ENCODE measurements at regions of chr20 and their contacts with region 1.

Region 1: DNA sequence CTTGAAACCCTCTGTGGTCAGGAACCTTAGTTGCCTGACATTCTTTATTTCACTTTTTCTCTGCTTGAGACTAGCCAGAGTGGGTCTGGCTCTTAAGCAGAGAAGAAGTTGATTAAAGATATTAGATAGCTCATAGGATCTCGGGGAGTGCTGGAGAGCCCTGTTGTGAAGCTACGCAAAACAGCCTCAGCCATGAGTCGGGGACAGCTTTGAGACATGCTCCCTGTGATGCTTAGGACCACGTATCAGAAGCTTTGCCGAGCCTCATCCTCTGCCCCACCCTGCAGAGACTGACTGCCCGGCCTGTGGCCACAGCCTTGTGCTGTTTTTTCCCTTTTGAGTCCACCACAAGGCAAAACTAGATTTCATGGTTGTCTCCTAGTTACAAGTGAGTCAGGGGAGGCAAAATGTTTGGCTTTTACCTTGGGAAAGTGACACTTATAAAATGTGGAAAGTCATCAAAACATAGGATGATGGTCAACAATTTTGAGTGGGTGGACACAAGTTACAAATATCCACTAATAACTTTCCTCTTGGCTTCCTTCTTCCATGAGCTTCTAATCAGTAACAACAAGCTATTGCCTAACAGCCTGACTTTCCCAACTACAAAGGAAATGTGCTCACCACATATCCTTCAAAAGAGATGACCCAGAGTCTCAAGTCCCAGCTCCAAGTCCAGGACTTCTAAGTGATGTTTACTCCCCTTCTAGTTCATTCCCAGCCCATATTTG is 108.4 kb downstream of the JAG1 start:
- DNase-seq: peak; percentile 99
- ATAC-seq: peak; percentile 82
- H3K4me3 ChIP-seq: peak overlapping the region in 1 of 3 experiments; percentile 16; a peak in 1 of 6 replicates
- H3K27ac ChIP-seq: peak overlapping the region; percentile 97
- H3K4me1 ChIP-seq: peaks cover 62% of the 10 kb centered on the region
- H3K27me3 ChIP-seq: no peaks in the 10 kb centered on the region
- CTCF ChIP-seq: no peak
- EP300 ChIP-seq: peak; percentile 91 to 100
- POLR2A ChIP-seq: peak; percentile 24 to 49; a peak in 2 of 4 replicates
- RAD21 ChIP-seq: 0 out of 2 replicates have a peak, but pooled peaks have one; percentile 12

Region 2: DNA sequence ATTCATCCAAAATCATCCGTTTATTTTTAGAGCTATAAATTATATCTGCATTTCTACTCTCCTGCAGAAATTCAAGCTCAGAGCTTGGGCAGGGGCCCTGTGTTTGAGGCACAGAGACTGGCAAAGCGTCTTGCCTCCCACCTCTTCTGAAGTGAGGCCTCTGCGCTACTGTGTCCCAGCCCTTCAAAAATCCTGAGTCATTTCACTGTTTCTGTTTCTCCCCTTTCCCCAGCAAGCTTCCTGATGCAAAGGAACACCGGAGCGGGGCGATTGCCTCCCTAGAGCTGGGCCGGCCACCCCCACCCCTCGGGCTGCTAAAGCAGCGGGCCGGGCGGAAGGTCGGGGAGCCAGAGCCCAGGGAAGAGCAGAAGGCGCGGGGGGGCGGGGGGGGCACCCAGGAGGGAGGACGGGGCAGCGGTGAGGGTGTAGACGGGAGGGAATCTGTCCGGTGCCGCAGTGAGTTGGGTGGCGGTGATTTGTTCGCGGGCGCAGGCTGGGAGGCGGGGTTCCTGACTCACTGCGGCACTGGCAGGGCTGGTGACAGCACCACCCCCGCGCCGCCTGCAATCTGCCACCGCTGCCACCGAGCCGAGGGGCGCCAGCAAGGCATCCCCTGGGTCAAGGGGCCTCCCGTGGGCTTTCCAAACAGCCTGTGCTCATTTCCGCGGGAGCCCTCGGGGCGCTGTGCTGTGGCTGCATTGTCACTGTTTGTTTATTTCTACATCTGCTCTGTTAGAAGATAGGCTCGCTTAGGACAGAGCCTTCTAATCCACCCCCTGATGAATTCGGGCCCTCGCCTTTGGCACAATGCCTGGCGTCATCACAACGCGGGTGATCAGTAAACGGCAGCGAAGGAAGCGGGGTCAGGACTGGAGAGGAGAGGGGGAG is 393.2 kb before region 1 on chr20:
- CTCF ChIA-PET with region 1: no interaction called
- POLR2A ChIA-PET with region 1: no interaction called
- in situ Hi-C with region 1: no loop called
- intact Hi-C with region 1: no loop called
- DNase-seq: no peak
- ATAC-seq: peak; percentile 65
- H3K4me3 ChIP-seq: no peak overlapping the region
- H3K27ac ChIP-seq: no peak overlapping the region
- H3K4me1 ChIP-seq: no peaks in the 10 kb centered on the region
- H3K27me3 ChIP-seq: no peaks in the 10 kb centered on the region; a peak in 1 of 5 replicates
- CTCF ChIP-seq: no peak
- EP300 ChIP-seq: no peak
- POLR2A ChIP-seq: no peak
- RAD21 ChIP-seq: no peak

Region 3: GRCh38 chr20:10469599-10469998 is 95.8 kb before region 1 on chr20:
- CTCF ChIA-PET with region 1: no interaction called
- POLR2A ChIA-PET with region 1: no interaction called
- in situ Hi-C with region 1: no loop called
- intact Hi-C with region 1: no loop called
- DNase-seq: peak; percentile 77
- ATAC-seq: peak; percentile 80
- H3K4me3 ChIP-seq: no peak overlapping the region
- H3K27ac ChIP-seq: no peak overlapping the region
- H3K4me1 ChIP-seq: peaks cover 27% of the 10 kb centered on the region
- H3K27me3 ChIP-seq: no peaks in the 10 kb centered on the region
- CTCF ChIP-seq: peak; percentile 74
- EP300 ChIP-seq: no peak
- POLR2A ChIP-seq: no peak
- RAD21 ChIP-seq: peak; percentile 65

Region 4: GRCh38 chr20:10596726-10597125 is 31.4 kb after region 1 on chr20:
- CTCF ChIA-PET with region 1: no interaction called
- POLR2A ChIA-PET with region 1: interaction called, 15 read pairs
- in situ Hi-C with region 1: no loop called
- intact Hi-C with region 1: no loop called
- DNase-seq: peak; percentile 91
- ATAC-seq: peak; percentile 65
- H3K4me3 ChIP-seq: no peak overlapping the region
- H3K27ac ChIP-seq: peak overlapping the region; percentile 30
- H3K4me1 ChIP-seq: peaks cover 53% of the 10 kb centered on the region
- H3K27me3 ChIP-seq: no peaks in the 10 kb centered on the region
- CTCF ChIP-seq: no peak
- EP300 ChIP-seq: peak; percentile 51 to 52; a peak in 1 of 4 replicates
- POLR2A ChIP-seq: no peak
- RAD21 ChIP-seq: no peak

Region 5: DNA sequence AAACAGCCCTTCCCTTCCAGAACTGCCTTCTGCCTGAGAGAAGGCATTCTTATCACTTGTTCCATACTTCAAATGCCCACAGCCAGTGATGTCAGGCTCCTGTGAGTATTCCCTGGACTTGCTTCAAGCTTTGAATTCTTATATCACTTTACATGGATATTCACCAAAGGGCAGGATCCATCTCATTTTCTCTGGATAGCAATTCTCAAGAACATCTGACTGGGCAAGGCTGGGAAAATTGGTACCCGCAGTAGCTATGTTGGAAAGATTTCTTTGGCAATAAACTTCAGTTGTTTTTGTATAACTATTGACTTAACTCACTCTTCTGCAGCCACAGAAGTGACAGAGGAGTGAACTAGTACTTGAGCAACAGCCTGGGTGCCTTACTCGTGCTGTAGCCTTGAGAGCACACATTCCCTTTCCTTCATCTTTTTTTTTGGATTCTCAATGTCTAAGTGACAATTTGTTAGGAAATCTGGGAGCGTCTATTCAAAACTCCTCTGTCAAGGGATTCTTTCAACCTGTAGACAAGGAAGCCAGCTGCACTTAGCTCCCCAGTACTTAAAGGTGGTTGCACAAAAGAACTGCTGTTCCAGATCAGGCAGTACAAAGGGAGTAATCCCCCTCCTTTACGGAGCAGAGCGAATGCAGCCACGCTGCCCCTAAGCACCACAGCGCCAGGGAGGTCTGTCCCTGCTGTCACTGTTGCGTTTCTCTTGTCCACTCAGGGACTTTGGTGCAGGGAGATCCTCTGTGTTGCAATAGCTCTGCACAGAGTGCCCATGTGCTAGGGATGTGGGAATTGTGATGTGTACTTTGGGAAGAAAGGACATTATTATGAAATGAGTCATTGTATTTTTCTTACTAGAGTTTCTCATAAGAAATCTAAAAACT is 38.9 kb after region 1 on chr20:
- CTCF ChIA-PET with region 1: no interaction called
- POLR2A ChIA-PET with region 1: interaction called, 29 read pairs
- in situ Hi-C with region 1: no loop called
- intact Hi-C with region 1: loop called (anchors 1 kb)
- DNase-seq: peak; percentile 99
- ATAC-seq: peak; percentile 100
- H3K4me3 ChIP-seq: peak overlapping the region; percentile 6 to 54 (median 9); a peak in 3 of 6 replicates
- H3K27ac ChIP-seq: peak overlapping the region; percentile 76
- H3K4me1 ChIP-seq: peaks cover 31% of the 10 kb centered on the region
- H3K27me3 ChIP-seq: no peaks in the 10 kb centered on the region
- CTCF ChIP-seq: peak; percentile 61
- EP300 ChIP-seq: peak; percentile 87 to 97; a peak in 3 of 4 replicates
- POLR2A ChIP-seq: peak; percentile 62 to 83
- RAD21 ChIP-seq: peak; percentile 60; the same call in 1 of the 2 replicates